CD14-positive monocyte (primary cell): ENCODE measurements at regions of chr7 and their contacts with region 1.

Region 1: DNA sequence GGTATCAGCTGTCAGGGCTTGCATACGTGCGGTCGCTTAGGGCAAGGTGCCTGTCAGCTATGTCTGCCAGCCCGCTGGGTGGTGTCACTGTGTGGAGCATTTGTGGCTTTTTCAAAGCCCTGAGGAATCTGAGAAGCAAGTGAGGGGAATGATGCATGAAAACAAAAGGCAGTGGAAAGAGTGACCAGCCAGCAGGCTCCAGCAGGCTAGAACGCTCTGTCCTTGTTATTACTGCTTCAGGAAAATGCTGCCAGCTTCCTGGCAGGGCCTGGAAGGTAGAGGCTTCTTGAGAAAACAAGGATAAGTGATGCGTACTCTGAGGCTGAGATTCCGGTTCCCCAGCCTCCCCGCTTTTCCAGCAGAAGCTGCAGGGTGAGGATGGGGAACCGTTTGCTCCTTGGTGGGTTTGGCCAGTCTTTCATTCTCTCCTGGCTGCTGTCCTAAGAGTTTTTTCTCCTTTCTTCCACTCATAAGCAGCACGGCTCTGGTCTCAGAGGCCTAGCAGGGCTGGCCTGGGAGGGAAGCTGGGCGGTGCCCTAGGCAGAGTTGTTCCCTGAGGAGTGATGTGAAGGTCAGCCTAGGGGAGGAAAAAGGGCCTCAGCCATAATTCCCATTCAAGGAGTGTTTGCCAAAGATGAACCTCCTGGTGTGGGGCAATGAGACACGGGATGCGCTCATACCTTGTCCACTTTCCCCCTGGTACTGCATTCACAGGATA is 42.8 kb upstream of the MKLN1 start:
- DNase-seq: no peak
- H3K4me3 ChIP-seq: no peak overlapping the region
- H3K4me3 Mint-ChIP-seq: no peak overlapping the region
- H3K27ac ChIP-seq: no peak overlapping the region
- H3K27ac Mint-ChIP-seq: no peak overlapping the region
- H3K4me1 ChIP-seq: peaks cover 2 to 12% of the 10 kb centered on the region in 2 donors
- H3K4me1 Mint-ChIP-seq: peaks cover 13% of the 10 kb centered on the region
- H3K27me3 ChIP-seq: no peaks in the 10 kb centered on the region
- H3K27me3 Mint-ChIP-seq: peaks cover 0 to 3% (median 3%) of the 10 kb centered on the region in 3 donors
- CTCF ChIP-seq: no peak

Region 2: DNA sequence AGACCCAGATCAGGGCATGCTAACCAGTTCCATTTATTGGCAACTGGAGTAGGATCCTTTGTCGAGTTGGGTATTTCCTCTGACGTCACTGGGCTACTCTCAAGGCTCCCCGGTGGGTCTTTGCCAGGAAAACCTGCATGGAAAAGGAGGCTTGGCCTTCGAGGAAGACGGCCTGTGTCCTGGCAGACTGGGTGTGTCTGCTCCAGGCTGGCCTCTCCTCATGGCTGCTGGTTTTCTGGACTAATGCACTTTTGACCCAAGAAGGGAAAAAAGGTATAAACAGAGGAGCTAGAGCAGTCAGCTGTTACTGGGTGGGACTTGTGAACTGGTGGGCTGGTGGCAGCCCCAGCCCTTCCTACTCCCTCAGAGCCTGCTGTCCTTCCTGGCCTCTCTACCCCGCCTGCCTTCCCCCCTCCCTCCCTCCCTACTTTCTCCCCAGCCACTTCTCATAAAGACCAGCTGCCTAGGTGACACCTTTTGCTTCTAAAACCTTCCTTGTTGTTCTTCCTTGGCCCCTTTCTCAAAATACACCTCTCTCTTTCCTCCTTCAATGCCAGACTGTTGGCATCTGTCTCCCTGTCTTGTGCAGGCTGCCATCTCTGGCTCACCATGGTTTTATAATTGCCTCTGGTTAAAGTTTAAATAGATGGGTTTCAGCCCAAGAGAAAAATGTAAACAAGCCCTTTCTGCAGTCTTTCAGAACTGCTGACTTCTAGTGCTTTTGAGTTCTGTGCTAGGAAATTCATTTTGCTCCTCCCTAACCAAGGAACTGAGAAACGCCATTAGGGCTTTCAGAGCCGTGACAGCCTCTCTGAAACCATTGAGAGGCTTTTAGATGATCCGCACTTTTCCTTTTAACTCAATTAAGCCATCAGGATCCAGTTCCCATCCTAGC is 59.0 kb before region 1 on chr7:
- intact Hi-C with region 1: loop called in 1 of 2 experiments (anchors 10 kb)
- DNase-seq: no peak
- H3K4me3 ChIP-seq: no peak overlapping the region
- H3K4me3 Mint-ChIP-seq: no peak overlapping the region
- H3K27ac ChIP-seq: no peak overlapping the region
- H3K27ac Mint-ChIP-seq: peak overlapping the region in 1 of 7 donors; percentile 25
- H3K4me1 ChIP-seq: peaks cover 10% of the 10 kb centered on the region in 2 donors
- H3K4me1 Mint-ChIP-seq: peaks cover 17% of the 10 kb centered on the region
- H3K27me3 ChIP-seq: no peaks in the 10 kb centered on the region
- H3K27me3 Mint-ChIP-seq: peaks cover 0 to 1% (median 0%) of the 10 kb centered on the region in 3 donors
- CTCF ChIP-seq: no peak

Region 3: DNA sequence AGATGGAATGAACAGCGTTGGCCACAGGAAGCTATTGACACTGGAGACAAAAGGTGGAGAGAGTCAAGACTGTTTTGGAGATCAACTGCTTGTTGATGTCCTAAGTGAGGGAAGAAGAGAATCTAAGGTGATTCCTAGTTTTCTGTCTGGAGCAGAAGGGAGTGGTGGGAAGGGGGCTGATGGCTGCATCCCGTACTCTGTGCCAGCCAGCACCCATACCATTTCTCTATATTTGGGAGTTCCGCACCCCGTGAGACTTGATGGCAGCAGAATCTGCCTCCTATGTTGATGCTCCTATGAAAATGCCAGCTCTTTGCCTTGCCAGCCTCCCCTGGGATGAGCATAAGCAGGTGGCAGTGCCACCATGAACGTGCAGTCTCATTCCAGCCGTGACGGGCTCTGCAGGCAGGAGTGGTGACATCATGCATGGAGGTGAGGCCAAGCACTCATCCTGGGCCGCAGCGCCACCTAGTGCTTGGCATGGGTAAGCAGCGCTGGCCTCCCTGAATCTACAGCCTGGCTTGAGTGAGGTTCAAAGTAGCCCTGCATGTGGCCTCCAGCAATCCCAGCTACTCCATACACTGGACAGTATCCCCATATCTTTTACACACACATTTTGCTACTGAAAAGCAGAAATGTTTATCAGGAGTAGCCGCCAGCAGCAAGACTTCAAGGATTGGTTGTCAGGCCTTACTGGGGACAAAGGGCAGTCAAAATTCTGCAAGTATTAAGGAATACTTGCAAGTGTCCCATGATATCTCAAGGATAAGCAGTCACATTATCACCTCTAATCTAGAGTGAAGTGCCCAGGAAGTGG is 228.6 kb after region 1 on chr7:
- intact Hi-C with region 1: no loop called
- DNase-seq: peak; percentile 65 to 78 (median 71)
- H3K4me3 ChIP-seq: no peak overlapping the region
- H3K4me3 Mint-ChIP-seq: no peak overlapping the region
- H3K27ac ChIP-seq: no peak overlapping the region
- H3K27ac Mint-ChIP-seq: peak overlapping the region in 2 of 7 donors; percentile 20 to 27
- H3K4me1 ChIP-seq: peaks cover 0 to 2% of the 10 kb centered on the region in 2 donors
- H3K4me1 Mint-ChIP-seq: peaks cover 14% of the 10 kb centered on the region
- H3K27me3 ChIP-seq: no peaks in the 10 kb centered on the region
- H3K27me3 Mint-ChIP-seq: peaks cover 8 to 12% (median 8%) of the 10 kb centered on the region in 3 donors
- CTCF ChIP-seq: peak; percentile 98